PC-3 (cell line): ENCODE measurements at regions of chr15 and their contacts with region 1.

Region 1: GRCh38 chr15:90716976-90717821 is at the start of gene BLM:
- DNase-seq: peak; percentile 96
- ATAC-seq: peak; percentile 99
- H3K4me3 ChIP-seq: peak within 1 kb of the TSS; percentile 75
- H3K27ac ChIP-seq: peak within 1 kb of the TSS; percentile 29; the same call in 1 of the 2 replicates
- H3K4me1 ChIP-seq: peaks cover 5% of the 10 kb centered on the region; the same call in 1 of the 2 replicates
- H3K27me3 ChIP-seq: no peaks in the 10 kb centered on the region
- CTCF ChIP-seq: no peak
- total RNA-seq, gene BLM: 10.3 and 18.7 TPM in 2 replicates

Region 2: GRCh38 chr15:90735923-90736322 is 18.7 kb after region 1 on chr15:
- CTCF ChIA-PET with region 1: no interaction called
- POLR2A ChIA-PET with region 1: no interaction called
- intact Hi-C with region 1: no loop called
- DNase-seq: no peak
- ATAC-seq: no peak
- H3K4me3 ChIP-seq: no peak overlapping the region
- H3K27ac ChIP-seq: no peak overlapping the region
- H3K4me1 ChIP-seq: no peaks in the 10 kb centered on the region
- H3K27me3 ChIP-seq: no peaks in the 10 kb centered on the region
- CTCF ChIP-seq: no peak

Region 3: DNA sequence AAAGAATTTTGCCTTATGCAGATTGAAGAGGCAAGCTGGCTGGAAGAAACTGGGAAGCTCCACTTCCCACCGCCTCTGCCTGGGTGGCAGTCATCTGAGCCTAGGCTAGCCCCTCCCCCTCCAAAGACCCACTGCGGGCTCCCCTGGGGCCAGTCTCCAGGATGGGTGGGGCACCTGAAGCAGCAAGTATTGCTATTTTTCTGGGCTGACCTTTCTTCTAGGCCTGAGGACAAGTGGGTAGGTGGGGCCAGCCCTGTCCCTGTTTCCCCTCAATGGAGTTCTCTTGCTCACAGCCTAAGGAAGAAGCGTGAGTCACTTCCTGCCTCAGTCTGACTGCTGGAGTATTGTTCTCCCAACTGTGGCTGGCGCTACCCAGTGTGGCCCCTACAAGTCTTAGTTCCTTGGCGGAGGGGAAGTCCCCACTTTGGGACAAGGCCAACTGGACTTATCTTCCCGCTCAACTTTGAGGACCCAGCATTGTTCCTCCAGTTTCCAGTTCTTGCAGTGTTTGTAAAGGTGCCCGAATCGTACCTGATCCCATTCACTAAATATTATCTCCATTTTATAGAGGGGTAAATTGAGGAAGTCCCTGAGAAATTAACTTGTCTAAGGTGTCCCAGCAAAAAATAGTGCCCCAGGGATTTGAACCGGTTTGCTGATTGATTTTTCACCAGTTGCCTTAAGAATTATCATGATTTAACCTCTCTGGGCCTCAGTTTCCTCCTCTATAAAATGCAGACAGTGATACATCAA is 152.6 kb after region 1 on chr15:
- CTCF ChIA-PET with region 1: no interaction called
- POLR2A ChIA-PET with region 1: no interaction called
- intact Hi-C with region 1: loop called (anchors 5 kb)
- DNase-seq: peak; percentile 90
- ATAC-seq: peak; percentile 51
- H3K4me3 ChIP-seq: peak overlapping the region; percentile 68; the same call in 1 of the 2 replicates
- H3K27ac ChIP-seq: peak overlapping the region; percentile 84
- H3K4me1 ChIP-seq: peaks cover 70% of the 10 kb centered on the region
- H3K27me3 ChIP-seq: no peaks in the 10 kb centered on the region
- CTCF ChIP-seq: no peak

Region 4: GRCh38 chr15:90902040-90902839 is 185.0 kb after region 1 on chr15:
- CTCF ChIA-PET with region 1: interaction called, 16 read pairs
- POLR2A ChIA-PET with region 1: no interaction called
- intact Hi-C with region 1: no loop called
- DNase-seq: peak; percentile 83
- ATAC-seq: peak; percentile 89
- H3K4me3 ChIP-seq: peak overlapping the region; percentile 88
- H3K27ac ChIP-seq: no peak overlapping the region
- H3K4me1 ChIP-seq: peaks cover 13% of the 10 kb centered on the region
- H3K27me3 ChIP-seq: no peaks in the 10 kb centered on the region
- CTCF ChIP-seq: peak; percentile 74

Region 5: GRCh38 chr15:90915808-90916440 is 198.7 kb after region 1 on chr15:
- CTCF ChIA-PET with region 1: no interaction called
- POLR2A ChIA-PET with region 1: no interaction called
- intact Hi-C with region 1: no loop called
- DNase-seq: no peak
- ATAC-seq: no peak
- H3K4me3 ChIP-seq: no peak overlapping the region
- H3K27ac ChIP-seq: no peak overlapping the region
- H3K4me1 ChIP-seq: no peaks in the 10 kb centered on the region
- H3K27me3 ChIP-seq: no peaks in the 10 kb centered on the region
- CTCF ChIP-seq: no peak